Astrocyte of the cerebellum (primary cell): ENCODE measurements at regions of chr2 and their contacts with region 1.

Region 1: GRCh38 chr2:75241696-75242095 is 42.4 kb upstream of the TACR1 start:
- DNase-seq: no peak
- H3K4me3 ChIP-seq: no peak overlapping the region
- CTCF ChIP-seq: peak; percentile 13

Region 2: GRCh38 chr2:75123876-75124275 is 117.8 kb before region 1 on chr2:
- in situ Hi-C with region 1: no loop called
- DNase-seq: no peak
- H3K4me3 ChIP-seq: no peak overlapping the region
- CTCF ChIP-seq: no peak

Region 3: DNA sequence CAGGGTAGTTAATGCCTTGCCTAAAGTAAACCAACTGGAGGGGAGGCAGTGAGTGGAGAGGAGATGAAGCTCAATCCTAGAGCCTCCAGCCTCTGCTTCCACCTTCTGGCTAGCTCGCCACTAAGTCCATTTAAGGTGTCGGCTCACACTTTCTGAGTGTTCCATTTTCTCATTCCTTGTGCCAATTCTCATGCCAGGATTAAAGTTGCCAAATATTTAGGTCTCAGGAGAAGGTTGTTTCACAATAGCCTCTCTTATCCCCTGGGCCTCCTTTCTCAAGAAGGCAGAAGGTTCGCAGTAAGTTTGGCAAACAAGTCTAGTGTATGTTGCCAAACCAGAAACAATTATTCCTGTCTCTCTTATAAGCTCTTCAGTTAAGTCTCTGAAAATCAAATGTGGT is 99.6 kb before region 1 on chr2:
- in situ Hi-C with region 1: loop called (anchors 5 kb)
- DNase-seq: peak; percentile 18
- H3K4me3 ChIP-seq: no peak overlapping the region
- CTCF ChIP-seq: no peak